Breast epithelium (tissue), 4 donors: ENCODE measurements at regions of chr17 and their contacts with region 1.

Region 1: DNA sequence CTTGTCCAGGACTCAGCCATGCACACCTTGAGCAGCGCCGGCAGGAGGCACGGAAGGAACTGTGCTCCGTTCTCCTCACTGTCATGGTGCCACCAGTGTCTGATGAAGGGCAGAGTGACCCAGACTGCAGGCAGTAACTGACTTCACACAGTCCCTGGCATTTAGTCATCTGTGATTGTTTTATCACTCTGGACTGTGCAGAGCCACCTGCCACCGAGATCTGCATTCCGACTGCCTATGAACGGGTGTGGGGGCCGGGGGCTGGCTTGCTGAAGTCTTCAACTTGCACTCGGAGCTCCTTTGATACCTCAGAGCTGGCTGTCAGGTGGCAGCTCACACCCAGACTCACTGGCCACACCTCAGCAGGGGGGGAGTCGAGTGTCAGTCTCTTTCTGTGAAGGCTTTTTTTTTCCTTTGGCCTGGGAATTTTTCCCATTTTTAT is 20.3 kb upstream of the ENDOV start:
- DNase-seq: no peak
- H3K4me3 ChIP-seq: no peak overlapping the region
- H3K27ac ChIP-seq: no peak overlapping the region
- H3K4me1 ChIP-seq: no peaks in the 10 kb centered on the region
- H3K27me3 ChIP-seq: no peaks in the 10 kb centered on the region
- CTCF ChIP-seq: no peak
- POLR2A ChIP-seq: no peak

Region 2: GRCh38 chr17:80446645-80447405 is 52.1 kb after region 1 on chr17:
- intact Hi-C with region 1: no loop called
- DNase-seq: no peak
- H3K4me3 ChIP-seq: no peak overlapping the region
- H3K27ac ChIP-seq: no peak overlapping the region
- H3K4me1 ChIP-seq: no peaks in the 10 kb centered on the region
- H3K27me3 ChIP-seq: no peaks in the 10 kb centered on the region
- CTCF ChIP-seq: no peak
- POLR2A ChIP-seq: no peak

Region 3: GRCh38 chr17:81621494-81622130 is 1226.9 kb after region 1 on chr17:
- intact Hi-C with region 1: loop called (anchors 5 kb)
- DNase-seq: no peak
- H3K4me3 ChIP-seq: no peak overlapping the region
- H3K27ac ChIP-seq: peak overlapping the region in 1 of 2 donors; percentile 7
- H3K4me1 ChIP-seq: no peaks in the 10 kb centered on the region
- H3K27me3 ChIP-seq: no peaks in the 10 kb centered on the region
- CTCF ChIP-seq: no peak
- POLR2A ChIP-seq: no peak